Gastrocnemius medialis (tissue), 4 donors: ENCODE measurements at regions of chr10 and their contacts with region 1.

Region 1: GRCh38 chr10:67666416-67667034 is 29.5 kb downstream of the CTNNA3 start:
- DNase-seq: no peak
- ATAC-seq: peak in 1 of 2 donors; percentile 25
- H3K4me3 ChIP-seq: no peak overlapping the region
- H3K27ac ChIP-seq: peak overlapping the region; percentile 82 to 91 (median 88)
- H3K4me1 ChIP-seq: peaks cover 33 to 52% of the 10 kb centered on the region in 2 donors
- H3K27me3 ChIP-seq: no peaks in the 10 kb centered on the region
- CTCF ChIP-seq: peak; percentile 36 to 69 (median 42)
- POLR2A ChIP-seq: no peak

Region 2: GRCh38 chr10:67764012-67764822 is 97.7 kb after region 1 on chr10:
- in situ Hi-C with region 1: no loop called
- intact Hi-C with region 1: loop called (anchors 2 kb)
- DNase-seq: peak; percentile 83 to 91
- ATAC-seq: peak; percentile 93 to 94
- H3K4me3 ChIP-seq: peak overlapping the region; percentile 67 to 99 (median 80)
- H3K27ac ChIP-seq: peak overlapping the region; percentile 89 to 99 (median 94)
- H3K4me1 ChIP-seq: no peaks in the 10 kb centered on the region
- H3K27me3 ChIP-seq: no peaks in the 10 kb centered on the region
- CTCF ChIP-seq: no peak
- POLR2A ChIP-seq: no peak

Region 3: GRCh38 chr10:67779465-67780203 is 113.1 kb after region 1 on chr10:
- in situ Hi-C with region 1: no loop called
- intact Hi-C with region 1: loop called (anchors 1 kb)
- DNase-seq: peak; percentile 36 to 46
- ATAC-seq: peak; percentile 82 to 90
- H3K4me3 ChIP-seq: no peak overlapping the region
- H3K27ac ChIP-seq: no peak overlapping the region
- H3K4me1 ChIP-seq: peaks cover 0 to 5% of the 10 kb centered on the region in 2 donors
- H3K27me3 ChIP-seq: no peaks in the 10 kb centered on the region
- CTCF ChIP-seq: peak; percentile 78 to 91 (median 87)
- POLR2A ChIP-seq: no peak

Region 4: GRCh38 chr10:67884313-67884841 is 217.9 kb after region 1 on chr10 and contains the start of gene SIRT1:
- in situ Hi-C with region 1: no loop called
- intact Hi-C with region 1: loop called (anchors 10 kb)
- DNase-seq: peak; percentile 97
- ATAC-seq: peak; percentile 86 to 88
- H3K4me3 ChIP-seq: peak within 1 kb of the TSS; percentile 74 to 98 (median 85)
- H3K27ac ChIP-seq: peak within 1 kb of the TSS; percentile 87 to 96 (median 94)
- H3K4me1 ChIP-seq: peaks cover 20 to 22% of the 10 kb centered on the region in 2 donors
- H3K27me3 ChIP-seq: no peaks in the 10 kb centered on the region
- CTCF ChIP-seq: peak in 1 of 5 experiments; percentile 27
- POLR2A ChIP-seq: peak; percentile 98
- total RNA-seq, gene SIRT1: 18.7 to 21.5 (median 19.9) TPM

Region 5: GRCh38 chr10:68074775-68075549 is 408.4 kb after region 1 on chr10 and contains the start of gene HERC4:
- in situ Hi-C with region 1: no loop called
- intact Hi-C with region 1: loop called (anchors 10 kb)
- DNase-seq: peak; percentile 94
- ATAC-seq: peak; percentile 92 to 96
- H3K4me3 ChIP-seq: peak within 1 kb of the TSS; percentile 87 to 100 (median 96)
- H3K27ac ChIP-seq: peak within 1 kb of the TSS; percentile 94 to 99 (median 99)
- H3K4me1 ChIP-seq: peaks cover 32 to 42% of the 10 kb centered on the region in 2 donors
- H3K27me3 ChIP-seq: no peaks in the 10 kb centered on the region
- CTCF ChIP-seq: peak in 1 of 5 experiments; percentile 4
- POLR2A ChIP-seq: peak; percentile 88 to 90
- total RNA-seq, gene HERC4: 12.8 to 25.2 (median 13.1) TPM